HCT116 (cell line): ENCODE measurements at regions of chr17 and their contacts with region 1.

Region 1: GRCh38 chr17:57892146-57892828 is 42.4 kb upstream of the MRPS23 start:
- DNase-seq: peak; percentile 81
- ATAC-seq: peak; percentile 71
- H3K4me3 ChIP-seq: peak overlapping the region; percentile 27 to 40
- H3K27ac ChIP-seq: peak overlapping the region; percentile 82
- H3K4me1 ChIP-seq: peaks cover 67 to 83% of the 10 kb centered on the region in 2 experiments
- H3K27me3 ChIP-seq: no peaks in the 10 kb centered on the region
- CTCF ChIP-seq: peak in 2 of 3 experiments; percentile 99 to 100; a peak in 4 of 6 replicates
- POLR2A ChIP-seq: no peak
- RAD21 ChIP-seq: no peak

Region 2: GRCh38 chr17:57868007-57868909 is 24.0 kb before region 1 on chr17:
- CTCF ChIA-PET with region 1: interaction called, 10 read pairs
- POLR2A ChIA-PET with region 1: no interaction called
- RAD21 ChIA-PET with region 1: no interaction called
- intact Hi-C with region 1: loop called (anchors 1 kb)
- DNase-seq: peak; percentile 90
- ATAC-seq: peak; percentile 85
- H3K4me3 ChIP-seq: peak overlapping the region; percentile 6 to 41; a peak in 3 of 4 replicates
- H3K27ac ChIP-seq: peak overlapping the region; percentile 77
- H3K4me1 ChIP-seq: peaks cover 47 to 88% of the 10 kb centered on the region in 2 experiments
- H3K27me3 ChIP-seq: no peaks in the 10 kb centered on the region
- CTCF ChIP-seq: peak in 2 of 3 experiments; percentile 74 to 77; a peak in 4 of 6 replicates
- POLR2A ChIP-seq: no peak
- RAD21 ChIP-seq: no peak

Region 3: DNA sequence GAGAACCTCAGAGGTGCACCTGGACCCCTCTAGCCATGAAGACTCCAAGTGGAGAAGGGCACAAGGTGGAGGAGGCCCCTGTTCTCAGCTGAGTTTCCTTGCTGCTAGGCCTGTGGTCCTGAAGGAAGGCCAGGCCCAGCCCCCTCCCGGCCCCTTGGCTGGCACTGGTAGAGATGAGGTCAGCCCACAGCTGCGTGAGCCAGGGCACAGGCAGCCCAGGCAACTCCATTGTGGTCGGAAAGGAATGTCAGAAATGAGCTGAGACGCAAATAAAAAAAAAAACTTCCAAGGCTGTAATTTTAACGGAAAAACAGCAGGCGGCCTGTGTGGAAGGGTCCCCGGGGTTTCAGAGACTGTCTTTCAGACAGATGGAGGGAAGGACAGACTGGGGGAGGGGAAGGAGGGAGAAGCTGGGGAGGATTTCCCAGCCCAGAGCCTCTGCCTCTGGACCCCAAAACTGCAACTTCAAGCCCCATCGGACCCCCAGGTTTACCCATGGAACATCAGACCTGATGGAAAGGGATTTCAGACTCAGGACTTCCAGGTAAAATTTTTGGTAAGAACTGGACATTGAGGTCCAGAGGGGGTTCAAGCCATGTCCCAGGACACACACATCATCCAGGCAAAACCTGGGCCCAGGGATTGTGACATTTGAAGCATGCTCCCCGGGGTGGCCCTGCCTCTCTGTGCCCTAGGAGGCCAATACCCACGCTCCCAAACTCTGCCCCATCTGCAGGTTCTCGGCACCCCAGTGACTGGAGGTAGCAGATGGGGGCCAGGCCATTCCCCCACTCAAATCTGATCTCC is 16.8 kb before region 1 on chr17:
- CTCF ChIA-PET with region 1: interaction called, 11 read pairs
- POLR2A ChIA-PET with region 1: interaction called, 5 read pairs
- RAD21 ChIA-PET with region 1: interaction called, 4 to 5 read pairs
- intact Hi-C with region 1: no loop called
- DNase-seq: peak; percentile 90
- ATAC-seq: peak; percentile 81
- H3K4me3 ChIP-seq: peak overlapping the region; percentile 17 to 45
- H3K27ac ChIP-seq: peak overlapping the region; percentile 68
- H3K4me1 ChIP-seq: peaks cover 71 to 98% of the 10 kb centered on the region in 2 experiments
- H3K27me3 ChIP-seq: no peaks in the 10 kb centered on the region
- CTCF ChIP-seq: peak in 2 of 3 experiments; percentile 55 to 60; a peak in 4 of 6 replicates
- POLR2A ChIP-seq: no peak
- RAD21 ChIP-seq: no peak

Region 4: DNA sequence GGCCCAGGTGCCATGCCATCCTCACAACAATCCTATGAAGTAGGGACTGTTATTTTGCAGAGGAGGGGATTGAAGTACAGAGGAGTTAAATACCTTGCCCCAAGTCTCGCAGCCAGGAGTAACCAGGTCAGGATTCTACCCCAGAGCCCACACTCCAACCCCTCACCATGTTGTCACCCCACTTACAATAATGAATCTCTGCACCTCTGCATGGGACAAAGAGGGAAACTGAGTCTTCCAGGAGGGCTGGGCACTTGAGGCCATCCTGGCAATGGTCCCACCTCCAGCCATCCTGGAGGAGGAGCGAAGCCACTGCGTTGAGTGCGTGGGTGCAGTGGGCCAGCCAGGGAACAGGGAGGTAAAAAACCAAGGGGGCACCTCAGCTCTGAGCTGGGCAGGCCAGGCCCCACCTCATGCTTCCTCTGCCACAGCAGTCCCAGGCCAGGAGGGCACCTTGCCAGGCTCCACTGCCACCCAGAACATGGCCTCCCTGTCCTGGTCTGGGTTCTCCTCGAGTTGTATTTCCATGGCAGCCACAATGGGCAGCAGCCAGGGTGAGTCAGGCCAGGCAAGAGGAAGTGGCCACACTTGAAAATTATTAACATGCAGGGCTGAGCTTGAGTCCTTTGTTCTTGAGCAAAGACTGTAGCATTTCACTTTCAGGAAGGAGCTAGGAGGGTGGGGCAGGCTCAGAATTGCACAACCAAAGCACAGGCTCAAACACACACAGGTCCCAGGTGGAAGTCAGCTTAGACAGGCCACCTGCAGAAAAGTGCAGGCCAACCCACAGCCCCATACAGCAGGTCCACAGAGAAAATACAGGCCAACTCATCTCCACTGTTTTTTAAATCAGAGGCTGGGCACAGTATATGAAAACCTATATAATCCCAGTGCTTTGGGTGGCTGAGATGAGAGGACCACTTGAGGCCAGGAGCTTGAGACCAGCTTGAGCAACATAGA is 10.8 kb after region 1 on chr17:
- CTCF ChIA-PET with region 1: interaction called, 14 read pairs
- POLR2A ChIA-PET with region 1: interaction called, 6 read pairs
- RAD21 ChIA-PET with region 1: interaction called, 4 to 10 read pairs
- intact Hi-C with region 1: no loop called
- DNase-seq: peak; percentile 92
- ATAC-seq: peak; percentile 63
- H3K4me3 ChIP-seq: peak overlapping the region in 1 of 2 experiments; percentile 31; a peak in 2 of 4 replicates
- H3K27ac ChIP-seq: peak overlapping the region; percentile 60
- H3K4me1 ChIP-seq: peaks cover 80 to 98% of the 10 kb centered on the region in 2 experiments
- H3K27me3 ChIP-seq: no peaks in the 10 kb centered on the region
- CTCF ChIP-seq: no peak
- POLR2A ChIP-seq: no peak
- RAD21 ChIP-seq: peak; percentile 46

Region 5: GRCh38 chr17:57927048-57927723 is 34.9 kb after region 1 on chr17:
- CTCF ChIA-PET with region 1: no interaction called
- POLR2A ChIA-PET with region 1: no interaction called
- RAD21 ChIA-PET with region 1: no interaction called
- intact Hi-C with region 1: no loop called
- DNase-seq: no peak
- ATAC-seq: peak; percentile 66
- H3K4me3 ChIP-seq: no peak overlapping the region
- H3K27ac ChIP-seq: peak overlapping the region; percentile 47
- H3K4me1 ChIP-seq: peaks cover 37 to 75% of the 10 kb centered on the region in 2 experiments
- H3K27me3 ChIP-seq: no peaks in the 10 kb centered on the region
- CTCF ChIP-seq: no peak
- POLR2A ChIP-seq: no peak
- RAD21 ChIP-seq: no peak